ENCODE measurements at regions of chr7 and their contacts with region 1.

Region 1: GRCh38 chr7:93551063-93551904 is 23.2 kb downstream of the CALCR start:
- DNase-seq: no peak
- ATAC-seq: peak; percentile 70
- H3K4me3 ChIP-seq: no peak overlapping the region
- H3K27ac ChIP-seq: no peak overlapping the region
- H3K4me1 ChIP-seq: no peaks in the 10 kb centered on the region
- H3K27me3 ChIP-seq: 0 out of 4 replicates have a peak, but pooled peaks cover 0 to 1% of the 10 kb centered on the region in 2 experiments
- CTCF ChIP-seq: peak; percentile 50 to 54 (median 50); a peak in 5 of 6 replicates
- EP300 ChIP-seq: no peak
- POLR2A ChIP-seq: no peak
- RAD21 ChIP-seq: peak; percentile 66

Region 2: GRCh38 chr7:93238748-93239147 is 312.5 kb before region 1 on chr7:
- CTCF ChIA-PET with region 1: interaction called, 103 read pairs
- POLR2A ChIA-PET with region 1: no interaction called
- RAD21 ChIA-PET with region 1: interaction called, 3 read pairs
- SMC1A ChIA-PET with region 1: interaction called, 4 read pairs
- in situ Hi-C with region 1: loop called (anchors 5 kb)
- intact Hi-C with region 1: no loop called
- DNase-seq: no peak
- ATAC-seq: no peak; the same call in 2 of the 3 replicates
- H3K4me3 ChIP-seq: no peak overlapping the region
- H3K27ac ChIP-seq: no peak overlapping the region
- H3K4me1 ChIP-seq: no peaks in the 10 kb centered on the region
- H3K27me3 ChIP-seq: no peaks in the 10 kb centered on the region
- CTCF ChIP-seq: no peak
- EP300 ChIP-seq: no peak
- POLR2A ChIP-seq: no peak
- RAD21 ChIP-seq: no peak

Region 3: DNA sequence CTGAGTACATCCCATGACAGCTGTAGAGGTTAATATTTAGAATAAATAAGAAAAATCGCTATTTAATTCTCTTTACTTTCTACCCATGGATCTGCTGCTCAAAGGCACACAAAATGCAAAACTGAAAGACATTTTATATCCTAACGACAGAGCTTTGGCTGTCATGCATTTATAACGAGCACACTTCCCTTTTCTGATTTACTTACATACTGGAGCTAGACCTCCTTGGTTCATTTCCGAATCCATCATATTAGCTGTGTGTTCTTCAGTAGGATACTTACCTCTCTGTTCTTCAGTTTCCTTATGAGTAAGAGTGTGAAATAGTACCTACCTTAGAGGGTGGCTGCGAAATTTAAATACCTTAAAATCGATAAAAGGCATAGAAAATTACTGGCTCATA is 12.3 kb after region 1 on chr7:
- CTCF ChIA-PET with region 1: interaction called, 19 read pairs
- POLR2A ChIA-PET with region 1: interaction called, 5 read pairs
- RAD21 ChIA-PET with region 1: no interaction called
- SMC1A ChIA-PET with region 1: interaction called, 6 read pairs
- in situ Hi-C with region 1: no loop called
- intact Hi-C with region 1: no loop called
- DNase-seq: no peak
- ATAC-seq: no peak
- H3K4me3 ChIP-seq: no peak overlapping the region
- H3K27ac ChIP-seq: no peak overlapping the region
- H3K4me1 ChIP-seq: no peaks in the 10 kb centered on the region
- H3K27me3 ChIP-seq: no peaks in the 10 kb centered on the region
- CTCF ChIP-seq: no peak
- EP300 ChIP-seq: no peak
- POLR2A ChIP-seq: no peak
- RAD21 ChIP-seq: no peak

Measured in GM12878 (cell line).